Dorsolateral prefrontal cortex (tissue), 120 donors: ENCODE measurements at regions of chr10 and their contacts with region 1.

Region 1: GRCh38 chr10:77846718-77847630 is 79.6 kb downstream of the DLG5 start:
- DNase-seq: peak; percentile 61 to 91 (median 84)
- H3K4me3 ChIP-seq: peak overlapping the region in 2 of 59 donors; percentile 2 to 31
- H3K27ac ChIP-seq: peak overlapping the region in 47 of 59 donors; percentile 9 to 83 (median 54)
- H3K27me3 ChIP-seq: no peaks in the 10 kb centered on the region
- CTCF ChIP-seq: peak; percentile 90 to 99 (median 97)

Region 2: GRCh38 chr10:77667426-77668324 is 179.3 kb before region 1 on chr10:
- intact Hi-C with region 1: no loop called
- DNase-seq: peak in 1 of 10 donors; percentile 36
- H3K4me3 ChIP-seq: no peak overlapping the region
- H3K27ac ChIP-seq: no peak overlapping the region
- H3K27me3 ChIP-seq: peaks cover 0 to 7% (median 0%) of the 10 kb centered on the region in 45 donors
- CTCF ChIP-seq: no peak

Region 3: DNA sequence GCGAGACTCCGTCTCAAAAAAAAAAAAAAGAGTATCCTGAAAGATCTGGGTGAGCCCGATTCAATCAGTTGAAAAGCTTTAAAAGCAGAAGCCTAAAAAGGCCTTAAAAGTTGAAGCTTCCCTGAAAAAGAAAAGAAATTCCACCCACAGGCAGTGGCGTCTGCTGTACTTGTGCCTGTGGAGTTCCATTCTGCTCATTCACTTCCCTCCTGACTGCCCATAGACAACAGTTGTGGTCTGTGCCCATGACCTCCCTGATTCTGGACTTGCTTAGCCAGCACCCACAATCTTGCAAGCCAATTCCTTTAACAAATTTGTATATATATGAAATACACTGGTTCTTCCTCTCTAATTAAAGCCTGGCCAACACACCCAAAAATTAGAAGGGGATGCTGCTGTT is 62.1 kb before region 1 on chr10:
- intact Hi-C with region 1: no loop called
- DNase-seq: no peak
- H3K4me3 ChIP-seq: no peak overlapping the region
- H3K27ac ChIP-seq: no peak overlapping the region
- H3K27me3 ChIP-seq: no peaks in the 10 kb centered on the region
- CTCF ChIP-seq: no peak

Region 4: DNA sequence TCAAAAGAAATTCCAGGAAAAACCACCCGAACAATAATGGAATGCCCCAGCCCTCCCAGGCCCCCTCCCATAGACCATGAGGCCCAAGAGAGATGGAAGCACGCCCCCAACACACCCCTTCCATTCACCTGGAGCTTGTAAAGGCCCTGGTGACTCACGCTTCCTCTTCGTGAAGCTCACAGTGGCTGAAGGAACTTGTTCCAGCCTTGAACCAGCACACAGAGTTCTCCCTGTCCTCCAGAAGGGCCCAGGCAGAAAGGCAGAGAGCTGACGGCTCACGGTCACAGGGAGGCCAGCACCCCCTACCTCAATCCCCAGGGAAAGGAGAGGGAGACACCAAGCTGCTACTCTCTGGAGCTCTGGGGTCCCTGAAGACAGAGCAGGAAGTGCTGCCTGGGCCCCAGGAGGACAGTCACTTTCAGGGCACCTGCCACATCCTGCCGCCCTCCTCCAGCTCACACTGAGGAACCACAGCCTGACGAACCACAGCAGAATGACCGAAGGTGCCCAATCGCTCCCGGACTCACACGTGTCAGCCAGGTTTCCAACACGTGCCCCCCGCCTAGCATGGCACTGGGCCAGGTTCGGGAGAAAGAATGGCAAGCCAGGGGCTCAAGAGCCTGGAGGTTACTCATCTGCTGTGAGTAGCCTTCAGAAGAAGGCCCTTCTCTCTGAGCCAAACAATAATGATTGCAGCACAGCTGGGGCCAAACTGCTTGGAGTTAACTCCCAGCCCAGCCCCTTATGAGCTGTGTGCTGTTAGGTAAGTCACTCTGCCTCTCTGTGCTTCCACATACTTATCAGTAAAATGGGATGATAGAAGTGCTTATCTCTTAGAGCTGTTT is 26.8 kb after region 1 on chr10:
- intact Hi-C with region 1: loop called in 1 of 2 experiments (anchors 1 kb)
- DNase-seq: peak in 2 of 10 donors; percentile 30 to 35
- H3K4me3 ChIP-seq: no peak overlapping the region
- H3K27ac ChIP-seq: peak overlapping the region in 57 of 59 donors; percentile 49 to 94 (median 87)
- H3K27me3 ChIP-seq: no peaks in the 10 kb centered on the region
- CTCF ChIP-seq: no peak

Region 5: DNA sequence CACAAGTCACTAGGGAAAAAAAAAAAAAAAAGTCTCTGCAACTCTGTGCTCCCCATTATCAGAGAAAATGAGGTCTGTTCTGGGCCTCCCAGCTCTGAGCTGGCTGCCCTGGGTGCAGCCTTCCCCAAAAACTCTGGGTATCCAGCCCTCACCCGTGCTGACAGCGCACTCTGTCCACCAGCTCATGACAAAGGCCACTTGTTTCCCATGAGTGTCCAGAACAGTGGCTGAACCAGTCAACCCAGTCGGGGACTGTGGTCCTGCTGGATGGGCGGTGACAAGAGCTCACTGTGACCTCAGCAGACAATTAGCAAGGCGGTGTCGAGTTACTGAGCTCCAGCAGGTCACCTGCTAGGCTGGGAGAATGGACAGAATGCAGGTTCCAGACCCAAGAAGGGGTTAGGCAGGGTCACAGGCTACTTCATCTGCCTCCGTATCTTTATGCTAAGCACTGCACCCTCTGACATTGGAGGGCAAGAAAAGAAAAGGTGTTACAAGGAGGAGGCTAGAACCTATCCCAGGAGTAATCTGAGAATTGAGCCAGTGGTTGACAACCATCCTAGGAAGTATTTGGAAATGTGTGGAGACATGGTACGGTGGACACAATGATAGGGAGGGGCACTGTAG is 42.4 kb after region 1 on chr10:
- intact Hi-C with region 1: loop called in 1 of 2 experiments (anchors 5 kb)
- DNase-seq: peak in 9 of 10 donors; percentile 43 to 79 (median 70)
- H3K4me3 ChIP-seq: peak overlapping the region in 1 of 59 donors; percentile 31
- H3K27ac ChIP-seq: peak overlapping the region in 46 of 59 donors; percentile 1 to 88 (median 67)
- H3K27me3 ChIP-seq: no peaks in the 10 kb centered on the region
- CTCF ChIP-seq: peak in 11 of 56 donors; percentile 15 to 46 (median 23)

Region 6: DNA sequence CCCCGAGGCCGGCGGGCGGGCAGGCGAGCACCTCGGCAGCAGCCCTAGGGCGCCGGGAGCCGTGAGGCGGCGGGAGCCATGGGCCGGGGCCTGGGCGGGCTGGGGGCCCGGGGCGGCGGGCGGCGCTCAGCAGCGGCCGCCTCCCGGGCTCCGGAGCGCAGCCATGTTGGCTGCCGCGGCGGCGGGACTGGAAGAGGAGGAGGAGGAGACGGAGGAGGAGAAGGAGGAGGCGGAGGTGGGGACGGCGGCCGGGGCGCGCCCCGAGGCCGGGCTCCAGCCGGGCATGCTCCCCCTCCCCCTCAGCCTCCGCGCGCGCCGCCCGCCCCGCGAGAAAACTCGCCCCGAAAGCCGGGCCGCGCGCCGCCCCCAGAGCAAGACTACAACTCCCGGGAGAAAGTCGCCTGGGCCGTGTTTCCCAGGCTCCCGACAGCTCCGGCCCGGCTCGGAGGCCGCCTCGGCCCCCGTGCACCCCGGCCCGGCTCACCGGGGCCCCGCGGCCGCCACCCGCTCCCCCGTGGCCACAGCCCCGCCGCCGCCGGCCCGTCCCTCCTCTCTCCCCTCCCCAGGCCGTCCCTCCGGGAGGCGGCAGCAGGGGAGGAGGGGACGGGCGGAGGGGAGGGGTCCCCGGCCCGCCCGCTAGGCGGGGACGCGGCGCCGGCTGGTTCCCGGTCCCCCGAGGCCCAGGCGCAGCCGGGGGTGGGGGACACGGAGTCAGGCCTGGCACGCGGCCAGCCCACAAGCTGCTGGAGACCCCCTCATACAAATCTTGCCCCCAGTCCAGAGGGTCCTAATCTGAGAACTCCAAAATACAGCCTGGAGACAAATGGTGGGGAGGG is 79.8 kb after region 1 on chr10 and contains the start of gene DLG5:
- intact Hi-C with region 1: loop called (anchors 2 to 5 kb)
- DNase-seq: peak in 8 of 10 donors; percentile 21 to 70 (median 52)
- H3K4me3 ChIP-seq: peak within 1 kb of the TSS; percentile 62 to 91 (median 80)
- H3K27ac ChIP-seq: peak within 1 kb of the TSS in 58 of 59 donors; percentile 1 to 92 (median 78)
- H3K27me3 ChIP-seq: no peaks in the 10 kb centered on the region
- CTCF ChIP-seq: peak in 3 of 56 donors; percentile 4 to 30 (median 10)
- total RNA-seq, gene DLG5: 24.0 to 52.8 (median 34.1) TPM

Region 7: DNA sequence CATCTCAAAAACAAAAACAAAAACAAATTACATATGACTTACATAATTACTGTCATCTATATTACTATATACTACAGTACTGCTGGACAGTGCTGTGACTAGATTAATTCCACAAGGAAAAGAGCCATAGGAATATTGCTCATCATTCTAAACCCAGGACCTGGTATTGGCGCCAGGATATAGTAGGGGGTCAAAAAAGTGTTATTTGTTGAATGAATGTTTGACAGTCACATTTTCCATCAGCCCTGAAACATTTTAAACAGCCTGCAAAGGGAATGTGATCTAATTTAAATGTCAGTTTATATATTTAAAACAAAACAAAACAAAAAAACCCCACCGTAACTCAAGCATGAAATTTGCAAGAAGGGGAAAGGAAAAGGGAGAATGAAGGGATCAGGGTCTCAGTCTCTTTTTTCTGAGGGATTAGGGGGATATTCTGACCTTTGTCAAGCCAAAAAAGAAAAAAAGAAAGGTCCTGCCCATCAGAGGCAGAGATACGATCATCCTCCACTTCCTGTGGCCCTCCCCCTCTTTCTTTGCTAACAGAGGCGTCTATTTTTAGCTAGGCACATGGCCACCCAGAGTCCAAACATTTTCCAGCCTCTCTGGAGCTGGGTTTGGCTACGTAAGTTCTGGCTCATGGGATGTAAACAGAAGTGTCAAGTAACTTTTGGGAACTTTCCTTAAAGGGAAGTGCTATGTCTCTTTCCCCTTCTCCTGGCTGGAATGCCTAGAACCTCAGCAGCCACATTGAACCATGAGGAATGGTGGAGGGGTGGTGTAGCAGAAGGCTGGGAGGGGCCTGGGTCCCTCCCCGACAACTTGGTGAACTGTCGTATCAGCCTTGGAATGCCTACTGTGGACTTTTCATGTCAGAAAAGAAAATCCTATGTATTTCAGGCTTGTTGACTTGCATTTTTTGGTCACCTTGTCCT is 124.2 kb after region 1 on chr10:
- intact Hi-C with region 1: loop called in 1 of 2 experiments (anchors 10 kb)
- DNase-seq: peak in 3 of 10 donors; percentile 32 to 46 (median 41)
- H3K4me3 ChIP-seq: no peak overlapping the region
- H3K27ac ChIP-seq: peak overlapping the region in 27 of 59 donors; percentile 9 to 70 (median 44)
- H3K27me3 ChIP-seq: no peaks in the 10 kb centered on the region
- CTCF ChIP-seq: peak in 1 of 56 donors; percentile 14

Region 8: DNA sequence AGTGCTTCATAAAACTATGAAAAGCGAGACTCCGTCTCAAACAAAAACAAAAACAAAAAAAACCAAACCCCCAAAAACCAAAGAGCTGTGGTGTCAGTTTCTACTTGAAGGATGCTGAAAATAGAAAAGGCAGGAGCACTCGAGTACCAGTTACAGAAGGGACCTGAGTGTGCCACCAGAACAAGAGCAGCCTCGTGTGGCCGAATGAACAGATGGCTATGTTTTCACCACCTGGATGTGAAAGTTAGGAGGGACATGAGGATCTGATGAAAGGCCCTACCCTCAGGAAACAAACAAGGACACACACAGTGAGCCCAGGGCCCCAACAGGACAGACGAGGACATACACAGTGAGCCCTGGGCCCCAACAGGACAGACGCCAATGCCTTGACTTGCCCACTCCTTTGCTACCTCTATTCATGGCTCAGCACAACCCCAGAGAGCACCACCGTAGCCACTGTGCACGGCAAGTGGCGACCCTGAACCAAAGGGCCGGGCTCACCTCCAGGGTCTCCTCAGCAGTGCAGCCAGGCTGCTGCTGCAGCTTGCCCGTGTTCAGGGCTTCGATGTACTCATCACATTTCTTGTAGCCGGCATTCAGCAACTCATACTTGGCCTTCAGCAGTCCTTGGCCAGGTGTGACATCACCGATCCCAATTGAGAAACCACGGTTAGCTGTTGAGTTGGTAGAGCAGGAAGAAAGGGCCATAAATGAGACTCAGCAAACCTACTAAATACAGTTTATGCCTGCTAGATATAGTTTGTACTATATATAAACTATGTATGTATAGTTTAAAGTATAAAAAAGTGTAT is 157.4 kb after region 1 on chr10:
- intact Hi-C with region 1: loop called in 1 of 2 experiments (anchors 10 kb)
- DNase-seq: peak in 3 of 10 donors; percentile 44 to 62 (median 58)
- H3K4me3 ChIP-seq: no peak overlapping the region
- H3K27ac ChIP-seq: peak overlapping the region in 25 of 59 donors; percentile 1 to 73 (median 32)
- H3K27me3 ChIP-seq: no peaks in the 10 kb centered on the region
- CTCF ChIP-seq: peak in 12 of 56 donors; percentile 7 to 28 (median 18)

Region 9: GRCh38 chr10:78029269-78030226 is 182.6 kb after region 1 on chr10 and contains the start of gene POLR3A:
- intact Hi-C with region 1: loop called in 1 of 2 experiments (anchors 5 kb)
- DNase-seq: peak; percentile 85 to 93 (median 90)
- H3K4me3 ChIP-seq: peak within 1 kb of the TSS; percentile 61 to 100 (median 94)
- H3K27ac ChIP-seq: peak within 1 kb of the TSS; percentile 74 to 98 (median 91)
- H3K27me3 ChIP-seq: no peaks in the 10 kb centered on the region
- CTCF ChIP-seq: peak; percentile 45 to 91 (median 77)
- total RNA-seq, gene POLR3A: 23.2 to 48.6 (median 36.6) TPM